ENCODE measurements at regions of chr3 and their contacts with region 1.

Region 1: GRCh38 chr3:149879872-149880271 is 66.9 kb downstream of the RNF13 start:
- DNase-seq: peak in 2 of 9 donors; percentile 2 to 3
- ATAC-seq: peak; percentile 54
- H3K4me3 ChIP-seq: no peak overlapping the region
- H3K4me3 Mint-ChIP-seq: no peak overlapping the region
- H3K27ac ChIP-seq: no peak overlapping the region
- H3K27ac Mint-ChIP-seq: peak overlapping the region in 2 of 9 donors; percentile 3 to 25
- H3K4me1 ChIP-seq: no peaks in the 10 kb centered on the region
- H3K4me1 Mint-ChIP-seq: peaks cover 4 to 18% (median 7%) of the 10 kb centered on the region in 7 donors
- H3K27me3 ChIP-seq: no peaks in the 10 kb centered on the region
- H3K27me3 Mint-ChIP-seq: no peaks in the 10 kb centered on the region

Region 2: GRCh38 chr3:149839896-149840295 is 40.0 kb before region 1 on chr3:
- CTCF ChIA-PET with region 1: no interaction called
- POLR2A ChIA-PET with region 1: no interaction called
- intact Hi-C with region 1: no loop called
- DNase-seq: no peak
- ATAC-seq: no peak
- H3K4me3 ChIP-seq: no peak overlapping the region
- H3K4me3 Mint-ChIP-seq: peak overlapping the region in 2 of 10 donors; percentile 16 to 48
- H3K27ac ChIP-seq: no peak overlapping the region
- H3K27ac Mint-ChIP-seq: peak overlapping the region in 1 of 9 donors; percentile 16
- H3K4me1 ChIP-seq: no peaks in the 10 kb centered on the region
- H3K4me1 Mint-ChIP-seq: peaks cover 15 to 55% (median 49%) of the 10 kb centered on the region in 7 donors
- H3K27me3 ChIP-seq: no peaks in the 10 kb centered on the region
- H3K27me3 Mint-ChIP-seq: no peaks in the 10 kb centered on the region

Region 3: GRCh38 chr3:149860881-149861280 is 19.0 kb before region 1 on chr3:
- CTCF ChIA-PET with region 1: no interaction called
- POLR2A ChIA-PET with region 1: no interaction called
- intact Hi-C with region 1: loop called in 1 of 2 experiments (anchors 2 kb)
- DNase-seq: no peak
- ATAC-seq: no peak
- H3K4me3 ChIP-seq: no peak overlapping the region
- H3K4me3 Mint-ChIP-seq: no peak overlapping the region
- H3K27ac ChIP-seq: no peak overlapping the region
- H3K27ac Mint-ChIP-seq: no peak overlapping the region
- H3K4me1 ChIP-seq: no peaks in the 10 kb centered on the region
- H3K4me1 Mint-ChIP-seq: peaks cover 0 to 22% (median 14%) of the 10 kb centered on the region in 7 donors
- H3K27me3 ChIP-seq: no peaks in the 10 kb centered on the region
- H3K27me3 Mint-ChIP-seq: no peaks in the 10 kb centered on the region

Region 4: GRCh38 chr3:149941186-149941585 is 61.3 kb after region 1 on chr3:
- CTCF ChIA-PET with region 1: no interaction called
- POLR2A ChIA-PET with region 1: no interaction called
- intact Hi-C with region 1: no loop called
- DNase-seq: no peak
- ATAC-seq: no peak
- H3K4me3 ChIP-seq: no peak overlapping the region
- H3K4me3 Mint-ChIP-seq: no peak overlapping the region
- H3K27ac ChIP-seq: no peak overlapping the region
- H3K27ac Mint-ChIP-seq: no peak overlapping the region
- H3K4me1 ChIP-seq: no peaks in the 10 kb centered on the region
- H3K4me1 Mint-ChIP-seq: peaks cover 5 to 40% (median 27%) of the 10 kb centered on the region in 7 donors
- H3K27me3 ChIP-seq: no peaks in the 10 kb centered on the region
- H3K27me3 Mint-ChIP-seq: no peaks in the 10 kb centered on the region